ENCODE measurements at regions of chr15 and their contacts with region 1.

Region 1: DNA sequence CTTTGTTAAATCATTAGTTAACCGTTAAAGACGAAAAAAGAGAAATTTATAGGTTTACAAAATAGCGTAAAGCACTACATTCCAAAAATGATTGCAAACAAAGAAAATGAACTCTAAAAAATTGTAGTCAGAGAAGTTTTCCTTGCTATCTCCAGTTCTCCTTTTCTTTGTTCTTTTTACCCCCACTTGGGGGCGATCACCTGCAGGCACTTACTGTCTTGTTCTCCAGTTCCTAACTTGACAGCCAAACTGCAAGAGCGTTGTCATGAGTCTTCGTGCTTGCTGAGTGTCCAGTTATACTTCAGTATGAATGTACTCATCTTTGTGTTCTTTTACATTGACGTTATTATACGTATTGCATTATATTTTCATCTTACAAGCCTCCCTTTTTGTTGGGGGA is 54.5 kb downstream of the CHD2 start:
- DNase-seq: peak; percentile 26
- H3K4me3 Mint-ChIP-seq: no peak overlapping the region
- H3K27ac Mint-ChIP-seq: no peak overlapping the region
- H3K4me1 Mint-ChIP-seq: peaks cover 37% of the 10 kb centered on the region
- H3K27me3 Mint-ChIP-seq: no peaks in the 10 kb centered on the region

Region 2: DNA sequence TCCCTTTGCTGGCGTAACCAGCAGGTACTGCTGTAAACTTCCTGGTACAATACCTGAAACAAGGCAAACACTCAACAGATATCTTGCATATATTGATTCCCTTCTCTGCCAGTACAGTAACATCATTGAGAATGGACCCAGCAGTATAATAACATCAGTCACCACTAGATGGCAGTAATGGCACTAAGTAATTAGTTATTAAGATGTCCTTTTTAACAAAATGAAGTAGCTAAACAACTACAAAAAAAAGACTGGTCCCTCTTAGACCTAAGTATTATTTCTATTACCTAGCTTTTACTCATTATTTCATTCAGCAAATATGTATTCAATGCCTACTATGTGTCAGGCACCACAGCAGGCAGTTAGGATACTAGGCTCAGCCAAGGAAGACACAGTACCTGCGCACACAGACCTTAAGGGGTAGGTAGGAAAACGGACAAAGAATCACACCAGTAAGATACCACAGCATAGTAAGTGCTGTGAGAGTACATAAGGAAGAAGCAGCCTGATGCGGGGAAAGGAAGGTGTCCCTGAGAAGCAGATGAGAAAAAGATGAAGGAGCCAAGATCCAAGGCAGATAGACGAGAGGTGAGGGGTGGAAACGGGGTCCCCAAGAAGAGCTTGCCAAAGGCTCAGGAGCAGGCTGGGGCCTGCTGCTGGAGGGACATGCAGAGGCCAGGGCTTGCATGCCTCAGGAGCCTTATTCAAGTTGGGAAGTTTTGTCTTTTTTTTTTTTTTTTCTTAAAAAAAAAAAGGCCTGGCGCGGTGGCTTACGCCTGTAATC is 157.2 kb before region 1 on chr15:
- CTCF ChIA-PET with region 1: interaction called, 14 read pairs
- POLR2A ChIA-PET with region 1: no interaction called
- intact Hi-C with region 1: no loop called
- DNase-seq: no peak
- H3K4me3 Mint-ChIP-seq: no peak overlapping the region
- H3K27ac Mint-ChIP-seq: peak overlapping the region; percentile 69
- H3K4me1 Mint-ChIP-seq: peaks cover 9% of the 10 kb centered on the region
- H3K27me3 Mint-ChIP-seq: no peaks in the 10 kb centered on the region

Region 3: GRCh38 chr15:92803847-92804609 is 150.6 kb before region 1 on chr15:
- CTCF ChIA-PET with region 1: interaction called, 3 read pairs
- POLR2A ChIA-PET with region 1: no interaction called
- intact Hi-C with region 1: loop called (anchors 1 kb)
- DNase-seq: peak; percentile 94
- H3K4me3 Mint-ChIP-seq: peak overlapping the region; percentile 10
- H3K27ac Mint-ChIP-seq: peak overlapping the region; percentile 88
- H3K4me1 Mint-ChIP-seq: peaks cover 36% of the 10 kb centered on the region
- H3K27me3 Mint-ChIP-seq: no peaks in the 10 kb centered on the region

Region 4: DNA sequence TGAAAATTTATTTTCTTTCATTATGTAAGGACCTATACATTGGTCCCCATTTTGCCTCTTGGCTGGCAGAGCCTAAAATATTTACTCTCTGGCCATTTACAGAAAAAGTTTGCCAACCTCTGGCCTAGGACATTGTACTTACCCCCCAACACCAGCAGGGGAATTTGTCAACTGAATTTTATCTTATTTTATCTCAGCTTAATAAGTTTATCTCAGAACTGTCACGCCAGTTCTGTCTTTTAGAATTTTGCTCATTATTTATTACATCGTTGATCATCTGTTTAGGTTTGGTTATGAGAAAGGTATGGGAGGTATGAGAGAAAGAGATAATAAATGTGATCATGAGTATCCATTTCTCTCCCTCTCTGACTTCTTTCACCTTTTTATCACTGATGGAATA is 16.2 kb before region 1 on chr15:
- CTCF ChIA-PET with region 1: interaction called, 15 read pairs
- POLR2A ChIA-PET with region 1: interaction called, 3 read pairs
- intact Hi-C with region 1: loop called (anchors 2 kb)
- DNase-seq: no peak
- H3K4me3 Mint-ChIP-seq: no peak overlapping the region
- H3K27ac Mint-ChIP-seq: peak overlapping the region; percentile 33
- H3K4me1 Mint-ChIP-seq: peaks cover 69% of the 10 kb centered on the region
- H3K27me3 Mint-ChIP-seq: no peaks in the 10 kb centered on the region

Region 5: GRCh38 chr15:92981333-92981732 is 26.8 kb after region 1 on chr15:
- CTCF ChIA-PET with region 1: interaction called, 4 read pairs
- POLR2A ChIA-PET with region 1: no interaction called
- intact Hi-C with region 1: loop called (anchors 1 kb)
- DNase-seq: no peak
- H3K4me3 Mint-ChIP-seq: peak overlapping the region; percentile 12
- H3K27ac Mint-ChIP-seq: no peak overlapping the region
- H3K4me1 Mint-ChIP-seq: peaks cover 11% of the 10 kb centered on the region
- H3K27me3 Mint-ChIP-seq: no peaks in the 10 kb centered on the region

Region 6: DNA sequence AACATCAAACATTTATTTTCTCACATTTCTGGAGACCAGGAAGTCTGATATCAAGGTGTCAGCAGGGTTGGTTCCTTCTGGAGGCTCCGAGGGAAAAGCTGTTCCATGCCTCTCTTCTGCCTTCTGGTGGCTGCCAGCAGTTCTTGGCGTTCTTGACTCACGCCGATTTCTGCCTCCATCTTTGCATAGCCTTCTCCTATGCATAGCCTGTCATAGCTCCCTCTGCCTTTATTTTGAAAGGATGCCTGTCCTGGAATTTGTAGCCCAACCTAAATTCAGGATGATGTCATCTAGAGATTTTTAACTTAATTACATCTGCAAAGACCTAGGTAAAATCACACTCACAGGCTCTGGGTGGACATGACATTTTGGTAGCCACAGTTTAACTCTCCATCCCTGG is 64.0 kb after region 1 on chr15:
- CTCF ChIA-PET with region 1: no interaction called
- POLR2A ChIA-PET with region 1: no interaction called
- intact Hi-C with region 1: loop called (anchors 2 kb)
- DNase-seq: no peak
- H3K4me3 Mint-ChIP-seq: no peak overlapping the region
- H3K27ac Mint-ChIP-seq: peak overlapping the region; percentile 83
- H3K4me1 Mint-ChIP-seq: peaks cover 68% of the 10 kb centered on the region
- H3K27me3 Mint-ChIP-seq: no peaks in the 10 kb centered on the region